Activated CD4-positive, alpha-beta T cell treated with anti-CD3 and anti-CD28 coated beads, Interleukin-2, amount 10 ng/mL, durations not matched to agents 7 days and 5 days (primary cell): ENCODE measurements at regions of chr3 and their contacts with region 1.

Region 1: GRCh38 chr3:141311496-141312353 is 56.6 kb upstream of the ZBTB38 start:
- DNase-seq: peak; percentile 99
- H3K4me3 Mint-ChIP-seq: peak overlapping the region; percentile 90
- H3K27ac Mint-ChIP-seq: peak overlapping the region; percentile 96
- H3K4me1 Mint-ChIP-seq: peaks cover 59% of the 10 kb centered on the region
- H3K27me3 Mint-ChIP-seq: no peaks in the 10 kb centered on the region

Region 2: DNA sequence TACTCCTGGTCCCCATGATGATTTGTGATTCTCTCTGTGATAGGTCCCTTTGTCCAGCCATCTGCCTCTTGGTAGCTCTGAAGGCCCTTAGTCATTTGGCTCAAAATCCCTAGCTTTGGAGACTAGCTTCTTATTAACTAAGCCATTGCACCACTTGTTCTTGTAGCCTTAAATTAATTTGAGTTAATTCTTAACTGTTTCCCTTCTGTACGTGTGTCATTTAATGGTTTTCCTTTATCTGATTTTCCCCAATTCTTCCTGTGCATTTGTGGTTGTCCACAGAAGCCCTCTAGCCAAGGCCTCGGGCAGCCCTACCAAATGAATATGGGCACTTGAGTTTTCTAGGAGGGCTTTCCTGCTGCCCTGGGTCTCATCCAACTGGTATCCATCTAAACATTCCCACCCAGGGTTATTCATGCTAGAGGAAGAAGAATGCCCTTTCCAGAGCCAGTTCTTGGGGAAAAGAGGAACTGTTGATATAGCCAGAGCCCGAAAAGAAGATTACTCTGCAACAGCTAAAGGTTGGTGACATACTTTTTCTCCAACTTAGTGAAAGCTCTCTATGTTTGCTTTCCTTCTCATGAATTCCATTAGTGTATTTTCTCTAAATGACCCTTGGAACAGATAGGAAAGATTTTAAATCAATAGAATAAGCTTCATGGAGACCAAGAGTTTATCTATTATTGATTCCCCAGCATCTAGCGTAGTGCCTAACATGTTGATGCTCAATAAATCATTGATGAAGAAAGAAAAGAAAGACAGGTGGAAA is 12.4 kb after region 1 on chr3:
- CTCF ChIA-PET with region 1: interaction called, 17 read pairs
- POLR2A ChIA-PET with region 1: no interaction called
- DNase-seq: no peak
- H3K4me3 Mint-ChIP-seq: no peak overlapping the region
- H3K27ac Mint-ChIP-seq: no peak overlapping the region
- H3K4me1 Mint-ChIP-seq: peaks cover 16% of the 10 kb centered on the region
- H3K27me3 Mint-ChIP-seq: no peaks in the 10 kb centered on the region

Region 3: GRCh38 chr3:141426404-141427034 is 114.8 kb after region 1 on chr3:
- CTCF ChIA-PET with region 1: interaction called, 10 read pairs
- POLR2A ChIA-PET with region 1: no interaction called
- DNase-seq: no peak
- H3K4me3 Mint-ChIP-seq: no peak overlapping the region
- H3K27ac Mint-ChIP-seq: peak overlapping the region; percentile 50
- H3K4me1 Mint-ChIP-seq: peaks cover 3% of the 10 kb centered on the region
- H3K27me3 Mint-ChIP-seq: no peaks in the 10 kb centered on the region